ENCODE measurements at regions of chr18 and their contacts with region 1.

Region 1: GRCh38 chr18:5879479-5879882 is 15.8 kb downstream of the TMEM200C start:
- DNase-seq: no peak
- ATAC-seq: peak; percentile 52
- H3K4me3 ChIP-seq: no peak overlapping the region
- H3K27ac ChIP-seq: no peak overlapping the region
- H3K4me1 ChIP-seq: no peaks in the 10 kb centered on the region
- H3K27me3 ChIP-seq: no peaks in the 10 kb centered on the region
- CTCF ChIP-seq: peak; percentile 11 to 79 (median 75)
- POLR2A ChIP-seq: no peak

Region 2: DNA sequence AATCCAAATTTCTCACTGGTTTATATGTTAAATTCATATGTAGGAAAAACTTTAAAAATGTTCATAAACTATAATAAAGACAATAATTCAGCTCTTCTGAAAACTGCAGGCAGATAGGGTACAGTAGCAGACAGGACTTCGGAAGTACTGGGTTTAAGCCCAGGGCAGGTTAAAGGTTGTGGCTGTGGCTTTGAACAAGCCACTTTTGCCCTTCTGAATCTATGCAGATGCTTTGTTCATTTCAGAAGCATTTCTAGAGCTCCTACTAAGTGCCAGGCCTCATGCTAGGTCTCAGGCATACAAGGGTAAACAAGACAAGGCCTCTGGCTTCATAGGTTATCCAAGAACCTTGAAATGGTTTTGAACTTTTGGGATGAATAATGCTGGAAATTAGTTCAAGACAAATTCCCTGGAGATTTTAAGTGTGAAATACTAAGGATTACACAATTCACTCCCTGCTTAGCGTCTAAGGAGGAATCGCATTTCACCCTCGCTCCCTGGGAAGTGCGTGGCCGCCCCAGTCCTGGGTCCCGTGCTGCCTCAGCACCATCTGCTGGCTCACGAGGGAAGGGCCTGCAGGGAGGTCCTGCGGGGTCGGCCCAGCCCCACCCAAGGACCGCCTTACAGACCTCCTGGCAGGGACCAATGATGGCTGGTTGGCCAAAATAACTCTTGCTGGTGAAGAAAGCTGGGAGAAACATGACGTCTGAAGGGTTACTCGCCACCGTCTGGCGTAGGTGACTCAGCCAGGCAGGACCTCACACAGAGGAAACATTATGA is 602.9 kb after region 1 on chr18:
- intact Hi-C with region 1: loop called (anchors 10 kb)
- DNase-seq: peak; percentile 55 to 69 (median 56)
- ATAC-seq: peak; percentile 84
- H3K4me3 ChIP-seq: no peak overlapping the region
- H3K27ac ChIP-seq: peak overlapping the region in 3 of 4 donors; percentile 11 to 63 (median 47)
- H3K4me1 ChIP-seq: peaks cover 7% of the 10 kb centered on the region
- H3K27me3 ChIP-seq: no peaks in the 10 kb centered on the region
- CTCF ChIP-seq: peak; percentile 42 to 83 (median 60)
- POLR2A ChIP-seq: no peak

Region 3: DNA sequence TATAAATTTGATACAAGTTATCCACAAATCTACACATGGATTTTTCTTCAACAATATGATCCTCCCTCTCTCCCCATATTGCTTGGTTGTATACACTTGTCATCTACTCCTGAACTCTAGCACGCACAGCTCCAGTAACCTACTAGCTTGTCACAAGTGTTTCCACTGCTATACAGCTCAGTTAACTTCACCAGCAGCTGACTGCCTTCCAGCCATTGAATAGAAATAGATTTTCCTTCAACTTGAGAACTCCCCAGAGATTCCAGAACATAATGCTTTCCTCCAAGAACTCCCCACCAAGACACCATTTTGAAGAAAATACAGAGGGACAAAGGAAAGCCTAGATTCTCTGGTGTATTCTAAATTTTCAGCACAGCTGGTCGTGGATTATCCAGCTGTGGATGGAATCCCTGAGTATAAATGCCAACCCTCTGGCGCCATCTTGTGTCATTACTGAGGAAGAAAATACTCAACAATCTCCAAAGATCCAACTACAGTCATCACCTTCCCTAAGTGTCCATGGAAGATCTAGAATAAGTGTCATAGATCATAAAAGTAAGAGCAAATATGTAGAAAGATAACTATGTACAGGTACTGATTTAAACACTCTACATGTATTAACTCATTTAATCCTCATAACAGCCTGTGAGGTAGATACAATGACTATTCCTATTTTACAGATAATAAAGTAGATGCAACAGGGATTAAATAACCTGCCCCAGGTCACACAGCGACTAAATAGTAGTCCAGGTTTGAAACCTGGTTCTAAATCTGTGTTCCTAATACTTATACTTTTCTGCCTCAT is 1006.7 kb after region 1 on chr18:
- intact Hi-C with region 1: loop called (anchors 10 kb)
- DNase-seq: peak; percentile 51 to 62 (median 54)
- ATAC-seq: peak; percentile 75
- H3K4me3 ChIP-seq: no peak overlapping the region
- H3K27ac ChIP-seq: no peak overlapping the region
- H3K4me1 ChIP-seq: no peaks in the 10 kb centered on the region
- H3K27me3 ChIP-seq: no peaks in the 10 kb centered on the region
- CTCF ChIP-seq: peak; percentile 51 to 81 (median 74)
- POLR2A ChIP-seq: no peak

Measured in body of pancreas (tissue), 4 donors.